Left colon (tissue), 2 donors: ENCODE measurements at regions of chr7 and their contacts with region 1.

Region 1: DNA sequence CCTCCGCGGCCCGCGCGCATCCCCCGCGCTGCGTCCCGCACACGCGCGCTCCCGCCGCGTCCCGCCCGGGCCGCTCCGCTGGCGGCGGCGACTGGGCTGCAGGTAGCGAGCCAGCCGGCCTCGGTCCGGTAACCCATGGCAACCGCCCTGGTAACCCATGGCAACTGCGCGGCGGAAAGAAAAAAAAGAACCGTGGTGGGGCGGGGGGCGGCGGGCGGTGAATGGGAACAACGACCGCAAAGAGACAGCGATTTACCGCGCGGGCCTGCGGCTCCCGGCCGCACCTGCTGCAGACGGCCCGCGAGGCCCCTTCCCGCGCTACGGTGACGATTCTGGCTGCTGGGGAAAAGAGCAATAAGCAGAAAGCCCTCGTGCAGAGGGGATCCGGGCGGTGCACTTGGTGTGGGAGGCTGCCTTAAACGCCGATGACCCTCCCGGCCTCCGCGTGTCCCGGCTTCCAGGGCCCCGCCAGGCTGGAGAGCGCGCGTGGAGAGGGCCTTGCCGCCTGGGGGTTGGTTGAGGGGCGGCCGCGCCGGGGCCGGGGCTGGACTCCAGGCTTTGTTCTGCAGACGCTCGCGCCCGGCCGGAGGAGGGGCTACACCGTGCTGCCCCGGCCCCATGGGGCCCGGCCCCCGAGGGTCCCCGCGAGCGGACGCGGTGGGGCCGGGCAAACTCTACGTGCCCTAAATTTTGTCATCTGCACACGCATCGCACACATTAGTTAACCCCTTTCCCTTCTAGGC is 84.7 kb downstream of the SNX10 start:
- DNase-seq: peak in 1 of 2 donors; percentile 60
- ATAC-seq: peak; percentile 71

Region 2: DNA sequence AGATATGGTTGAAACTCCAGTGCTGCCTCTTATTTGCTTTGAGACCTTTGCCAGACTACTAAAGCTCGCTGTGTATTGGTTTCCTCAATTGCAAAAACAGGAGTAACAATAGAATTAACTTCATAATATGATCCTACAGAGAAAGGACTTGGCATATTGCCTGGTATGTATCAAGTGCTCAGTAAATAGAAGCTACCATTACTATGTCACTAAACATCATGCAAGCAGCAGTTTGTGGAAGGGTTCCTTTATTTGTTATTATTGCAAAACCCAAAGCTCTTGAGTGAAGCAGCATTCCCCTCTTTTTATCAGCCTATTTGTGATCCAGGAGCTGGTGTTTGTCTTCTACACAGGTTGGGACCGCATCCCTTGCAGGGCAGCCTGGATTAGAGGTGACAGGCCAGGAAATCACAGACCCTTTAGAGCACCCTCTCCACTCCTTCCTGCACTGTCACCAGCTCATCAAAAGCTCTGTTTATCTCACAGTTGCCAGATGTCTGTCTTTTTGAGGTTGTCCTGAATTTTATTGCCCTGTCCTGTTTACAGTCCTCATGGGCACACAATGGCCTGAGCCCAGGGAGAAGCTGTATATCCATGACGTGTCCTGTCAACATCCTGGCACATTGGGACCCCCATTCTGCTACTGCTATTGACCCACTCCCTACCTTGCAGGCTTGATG is 36.8 kb after region 1 on chr7:
- intact Hi-C with region 1: no loop called
- DNase-seq: no peak
- ATAC-seq: no peak

Region 3: GRCh38 chr7:26490650-26491624 is 114.6 kb after region 1 on chr7:
- intact Hi-C with region 1: loop called in 1 of 2 experiments (anchors 10 kb)
- DNase-seq: peak in 1 of 2 donors; percentile 22
- ATAC-seq: peak; percentile 91

Region 4: GRCh38 chr7:26667500-26668133 is 291.3 kb after region 1 on chr7:
- intact Hi-C with region 1: loop called in 1 of 2 experiments (anchors 10 kb)
- DNase-seq: peak; percentile 47 to 75
- ATAC-seq: peak; percentile 97

Region 5: DNA sequence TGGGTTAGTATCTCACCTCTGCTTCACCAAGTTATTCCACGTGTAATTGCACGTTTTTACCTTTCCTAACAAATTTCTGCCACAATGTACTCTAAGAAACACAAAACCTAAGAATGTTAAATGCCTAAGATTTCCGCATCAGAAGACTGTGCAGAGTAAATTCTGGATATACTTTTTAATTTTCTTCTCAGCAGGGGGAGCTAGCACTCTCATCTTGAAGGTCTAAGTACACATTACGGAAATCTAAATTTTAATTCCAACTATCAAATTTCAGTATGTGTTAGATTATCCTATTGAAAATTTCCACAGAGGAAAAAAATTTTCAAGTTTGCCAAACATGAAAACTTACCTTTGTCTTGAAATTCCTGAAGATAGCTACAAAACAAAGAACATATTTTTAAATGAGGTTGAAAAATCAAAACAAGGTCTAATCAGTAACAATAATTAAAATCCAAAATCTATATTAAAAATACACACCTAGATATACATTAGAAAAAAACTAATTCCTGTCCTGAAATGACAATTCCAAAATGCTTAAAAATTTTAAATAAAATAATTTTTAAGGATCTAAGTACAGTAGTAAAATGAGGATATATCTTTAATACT is 477.5 kb after region 1 on chr7:
- intact Hi-C with region 1: loop called in 1 of 2 experiments (anchors 10 kb)
- DNase-seq: no peak
- ATAC-seq: peak; percentile 48